ENCODE measurements at regions of chr13 and their contacts with region 1.

Region 1: GRCh38 chr13:46184277-46184699 is 2.3 kb upstream of the LCP1 start:
- DNase-seq: peak; percentile 92
- H3K4me3 Mint-ChIP-seq: peak overlapping the region; percentile 94
- H3K27ac Mint-ChIP-seq: peak overlapping the region; percentile 98
- H3K4me1 Mint-ChIP-seq: peaks cover 43% of the 10 kb centered on the region
- H3K27me3 Mint-ChIP-seq: peaks cover 1% of the 10 kb centered on the region

Region 2: GRCh38 chr13:45340926-45341750 is 843.1 kb before region 1 on chr13 and contains the start of gene TPT1:
- intact Hi-C with region 1: loop called (anchors 5 kb)
- DNase-seq: peak; percentile 100
- H3K4me3 Mint-ChIP-seq: peak within 1 kb of the TSS; percentile 99
- H3K27ac Mint-ChIP-seq: peak within 1 kb of the TSS; percentile 99
- H3K4me1 Mint-ChIP-seq: peaks cover 45% of the 10 kb centered on the region
- H3K27me3 Mint-ChIP-seq: no peaks in the 10 kb centered on the region
- total RNA-seq, gene TPT1: 2,188 and 2,224 TPM in 2 replicates

Region 3: DNA sequence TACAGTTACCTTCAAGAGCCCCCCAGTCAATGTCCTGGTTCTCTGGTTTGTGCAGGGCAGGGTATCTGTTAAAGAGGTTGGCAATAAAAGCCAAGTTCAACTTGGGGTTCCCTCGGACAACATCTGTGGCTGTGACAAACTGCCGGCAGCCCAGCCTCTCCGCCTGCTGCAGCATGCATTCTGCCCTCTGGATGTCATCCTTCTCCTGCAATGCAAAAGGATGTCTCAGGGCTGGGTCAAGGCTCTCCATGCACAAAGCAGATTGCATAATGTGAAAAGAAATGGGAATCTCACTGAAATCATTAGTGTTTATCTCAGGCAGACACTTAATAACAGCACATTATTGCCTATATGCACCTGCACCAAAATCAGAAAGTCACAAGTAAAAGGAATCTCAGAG is 37.4 kb before region 1 on chr13:
- intact Hi-C with region 1: loop called (anchors 5 kb)
- DNase-seq: no peak
- H3K4me3 Mint-ChIP-seq: no peak overlapping the region
- H3K27ac Mint-ChIP-seq: no peak overlapping the region
- H3K4me1 Mint-ChIP-seq: peaks cover 17% of the 10 kb centered on the region
- H3K27me3 Mint-ChIP-seq: no peaks in the 10 kb centered on the region

Region 4: DNA sequence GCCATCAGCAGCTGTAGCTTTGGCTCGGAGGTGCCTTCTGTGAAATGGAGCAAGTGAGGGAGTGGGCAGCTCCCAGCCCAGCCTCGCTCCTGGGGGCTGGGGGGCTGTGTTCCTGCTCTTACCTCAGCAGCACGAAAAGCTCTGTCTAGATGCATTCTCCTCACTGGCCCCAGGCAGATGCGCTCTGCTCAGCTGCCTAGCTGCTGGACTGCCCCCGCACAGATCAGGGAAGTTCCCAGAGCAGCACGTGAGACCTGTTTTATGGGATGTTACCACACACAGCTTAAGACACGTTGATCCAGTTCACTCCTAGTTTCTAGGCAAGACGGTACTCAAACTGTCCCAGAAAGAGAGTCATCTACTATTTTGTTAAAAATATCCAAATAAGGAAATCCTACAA is 15.9 kb before region 1 on chr13:
- intact Hi-C with region 1: loop called (anchors 1 kb)
- DNase-seq: peak; percentile 76
- H3K4me3 Mint-ChIP-seq: peak overlapping the region; percentile 82
- H3K27ac Mint-ChIP-seq: peak overlapping the region; percentile 92
- H3K4me1 Mint-ChIP-seq: peaks cover 83% of the 10 kb centered on the region
- H3K27me3 Mint-ChIP-seq: no peaks in the 10 kb centered on the region

Region 5: GRCh38 chr13:46202188-46202795 is 18.0 kb after region 1 on chr13:
- intact Hi-C with region 1: loop called (anchors 2 kb)
- DNase-seq: peak; percentile 72
- H3K4me3 Mint-ChIP-seq: peak overlapping the region; percentile 40
- H3K27ac Mint-ChIP-seq: peak overlapping the region; percentile 76
- H3K4me1 Mint-ChIP-seq: peaks cover 35% of the 10 kb centered on the region
- H3K27me3 Mint-ChIP-seq: no peaks in the 10 kb centered on the region

Region 6: DNA sequence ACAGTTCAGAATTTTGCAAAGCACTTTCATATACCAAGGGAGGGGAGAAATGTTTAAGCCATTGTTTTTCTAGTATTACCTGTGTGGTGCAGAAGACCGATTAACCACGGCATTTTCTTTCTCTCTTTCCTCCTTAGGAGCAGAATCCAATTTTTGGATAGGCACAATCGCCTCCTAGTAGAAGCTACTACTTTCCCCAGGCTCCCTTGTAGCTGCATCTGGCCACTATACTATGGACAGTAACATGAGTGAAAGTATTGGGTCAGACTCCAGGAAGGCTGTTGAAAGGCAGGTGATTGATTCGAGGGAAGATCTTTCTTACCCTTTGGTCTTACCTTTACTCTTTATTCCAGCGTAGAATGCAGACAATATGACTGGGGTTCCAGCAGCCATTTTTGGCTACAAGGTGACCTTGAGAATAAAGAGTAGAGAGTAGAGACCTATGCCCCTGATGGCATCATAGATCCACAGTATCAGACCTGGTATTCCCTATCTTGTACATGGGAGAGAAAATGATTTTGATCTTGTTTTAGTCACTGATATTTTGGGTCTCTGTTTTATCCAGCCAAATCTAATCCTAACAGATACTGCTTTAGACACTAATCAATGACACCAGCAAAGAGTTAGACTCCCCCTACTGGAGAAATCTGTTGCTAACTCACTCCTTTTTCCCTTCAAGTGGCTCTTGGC is 104.4 kb after region 1 on chr13:
- intact Hi-C with region 1: loop called (anchors 5 kb)
- DNase-seq: peak; percentile 80
- H3K4me3 Mint-ChIP-seq: no peak overlapping the region
- H3K27ac Mint-ChIP-seq: no peak overlapping the region
- H3K4me1 Mint-ChIP-seq: peaks cover 19% of the 10 kb centered on the region
- H3K27me3 Mint-ChIP-seq: no peaks in the 10 kb centered on the region